WTC11 (cell line): ENCODE measurements at regions of chr12 and their contacts with region 1.

Region 1: GRCh38 chr12:121579981-121580868 is 598 bp downstream of the KDM2B start:
- DNase-seq: peak; percentile 81
- ATAC-seq: peak; percentile 7; the same call in 1 of the 2 replicates
- H3K4me3 Mint-ChIP-seq: peak overlapping the region; percentile 99
- H3K27ac Mint-ChIP-seq: peak overlapping the region; percentile 100
- H3K4me1 Mint-ChIP-seq: peaks cover 46% of the 10 kb centered on the region
- H3K27me3 Mint-ChIP-seq: no peaks in the 10 kb centered on the region
- CTCF ChIP-seq: no peak

Region 2: DNA sequence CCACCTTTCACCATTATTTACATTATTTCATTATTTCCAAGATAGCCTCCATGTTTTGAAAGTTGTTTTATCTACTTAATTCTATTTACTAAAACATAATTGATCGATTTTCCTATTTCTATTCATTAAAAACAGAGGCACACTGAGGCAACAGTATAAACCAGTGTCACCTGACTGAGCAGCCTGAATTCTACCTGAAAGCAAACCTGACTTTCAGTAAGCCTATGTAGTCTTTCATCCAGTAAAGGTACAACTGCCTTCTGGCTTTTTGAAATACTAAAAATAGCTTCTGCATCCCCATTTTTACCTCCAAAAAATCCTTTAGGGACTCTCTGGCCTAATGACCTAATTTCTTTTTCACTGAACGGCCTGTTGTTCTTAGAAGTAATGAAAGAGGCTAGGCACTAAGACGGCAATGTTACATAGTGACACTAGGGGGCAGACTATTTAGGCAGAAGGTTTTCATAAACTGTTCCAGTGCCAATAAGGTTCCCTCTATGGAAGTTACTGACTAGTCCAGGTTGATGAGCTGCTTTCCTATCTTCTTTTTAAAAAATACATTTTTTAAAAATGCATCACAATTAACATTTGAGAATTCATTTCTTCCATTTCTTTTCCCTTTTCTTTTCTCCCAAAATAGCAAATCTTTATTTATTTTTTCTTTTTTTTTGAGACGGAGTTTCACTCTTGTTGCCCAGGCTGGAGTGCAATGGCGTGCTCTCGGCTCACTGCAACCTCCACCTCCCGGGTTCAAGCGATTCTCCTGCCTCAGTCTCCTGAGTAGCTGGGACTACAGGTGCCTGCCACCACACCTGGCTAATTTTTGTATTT is 245.5 kb before region 1 on chr12:
- CTCF ChIA-PET with region 1: no interaction called
- POLR2A ChIA-PET with region 1: no interaction called
- DNase-seq: no peak
- ATAC-seq: peak; percentile 86
- H3K4me3 Mint-ChIP-seq: no peak overlapping the region
- H3K27ac Mint-ChIP-seq: no peak overlapping the region
- H3K4me1 Mint-ChIP-seq: 0 out of 2 replicates have a peak, but pooled peaks cover 4% of the 10 kb centered on the region
- H3K27me3 Mint-ChIP-seq: no peaks in the 10 kb centered on the region
- CTCF ChIP-seq: peak; percentile 75

Region 3: DNA sequence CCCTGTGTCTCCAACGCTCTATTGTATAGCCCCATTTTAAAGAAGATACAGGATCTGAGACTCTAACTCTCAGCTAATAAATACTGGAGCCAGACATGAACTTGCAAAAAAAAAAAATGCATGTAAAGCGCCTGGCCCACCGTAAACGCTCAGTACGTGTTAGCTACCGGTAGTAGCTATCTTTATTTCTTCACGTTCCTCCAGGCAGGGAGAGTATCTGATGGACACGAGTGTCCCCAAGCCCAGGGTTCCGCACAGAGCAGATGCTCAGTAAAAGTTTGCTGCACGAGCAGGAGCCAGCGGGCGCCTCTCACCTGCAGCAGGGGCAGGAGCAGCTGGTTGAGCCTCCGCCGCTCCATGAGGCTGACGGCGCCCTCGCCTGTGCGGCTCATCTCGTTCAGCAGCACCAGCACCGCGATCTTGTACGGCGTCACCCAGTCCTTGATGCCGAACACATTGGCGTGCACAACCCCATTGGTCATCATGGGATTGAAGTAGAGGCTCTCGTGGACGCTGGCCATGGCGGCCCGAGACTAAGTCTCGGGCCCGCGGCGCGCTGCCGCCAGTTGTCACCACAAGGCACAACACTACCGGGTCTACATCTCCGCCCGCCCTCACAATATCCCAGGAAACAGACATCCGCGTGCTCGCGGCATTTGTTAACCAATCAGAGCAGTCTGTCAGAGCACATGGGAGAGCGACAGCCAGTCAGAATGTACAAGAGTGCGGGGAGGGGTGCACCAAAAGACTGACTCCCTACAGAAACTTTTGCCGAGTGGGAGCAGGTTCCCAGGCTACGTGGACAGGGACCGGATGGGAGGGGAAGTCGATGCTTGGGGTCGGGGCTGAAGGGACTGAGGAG is 228.2 kb before region 1 on chr12 and contains the start of gene ANAPC5:
- CTCF ChIA-PET with region 1: no interaction called
- POLR2A ChIA-PET with region 1: no interaction called
- DNase-seq: peak; percentile 90
- ATAC-seq: peak; percentile 97
- H3K4me3 Mint-ChIP-seq: peak within 1 kb of the TSS; percentile 99
- H3K27ac Mint-ChIP-seq: peak within 1 kb of the TSS; percentile 96
- H3K4me1 Mint-ChIP-seq: peaks cover 8% of the 10 kb centered on the region
- H3K27me3 Mint-ChIP-seq: no peaks in the 10 kb centered on the region; the same call in 1 of the 2 replicates
- CTCF ChIP-seq: no peak
- total RNA-seq, gene ANAPC5: 98.5 to 116 TPM (median 104 TPM) in 3 replicates

Region 4: DNA sequence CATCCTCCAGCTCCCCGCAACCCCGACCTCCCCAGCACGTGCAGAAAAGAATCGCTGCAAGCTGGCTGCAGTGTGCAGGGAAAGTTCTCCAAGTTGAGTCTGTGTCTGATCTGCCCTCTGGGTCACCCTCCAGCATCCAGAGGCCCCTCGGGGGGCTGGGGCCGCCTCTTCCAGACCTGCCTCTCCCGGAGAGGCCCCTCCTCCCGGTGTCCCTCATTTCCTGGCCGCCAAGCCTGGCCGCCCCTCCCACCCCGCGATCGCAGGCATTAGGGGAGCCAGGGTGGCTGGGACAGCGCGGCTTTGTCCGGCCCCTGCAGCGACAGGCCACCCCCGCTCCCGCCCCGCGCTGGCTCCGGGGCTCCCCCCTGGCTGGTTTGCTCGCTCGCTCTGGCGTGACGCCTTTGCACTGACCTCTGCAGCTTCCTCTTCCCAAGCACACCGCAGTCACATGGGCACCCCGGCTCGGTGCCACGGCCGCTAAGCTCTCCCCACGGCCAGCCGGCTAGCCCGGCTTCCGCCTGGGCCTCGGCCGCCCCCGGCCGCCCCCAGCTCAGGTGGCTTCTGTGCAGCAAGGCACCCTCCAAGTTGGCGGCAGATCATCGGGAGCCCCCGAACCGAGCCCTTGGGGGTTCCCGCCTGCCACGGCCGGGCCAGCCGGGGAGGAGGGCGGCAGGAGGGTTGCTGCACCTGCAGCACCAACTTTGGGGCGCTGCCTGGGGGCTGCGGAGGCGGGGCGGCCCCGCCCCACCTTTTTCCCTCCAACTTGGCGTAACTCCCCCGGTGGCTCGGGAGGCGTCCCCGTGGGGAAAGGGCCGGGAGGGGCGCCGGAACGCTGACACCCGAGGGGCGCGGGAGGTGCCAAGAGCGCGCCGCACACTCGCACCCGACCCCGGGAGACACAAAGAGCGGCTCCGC is 43.1 kb before region 1 on chr12:
- CTCF ChIA-PET with region 1: interaction called, 5 read pairs
- POLR2A ChIA-PET with region 1: interaction called, 13 read pairs
- DNase-seq: peak; percentile 57
- ATAC-seq: peak; percentile 26
- H3K4me3 Mint-ChIP-seq: peak overlapping the region; percentile 65
- H3K27ac Mint-ChIP-seq: no peak overlapping the region
- H3K4me1 Mint-ChIP-seq: peaks cover 59% of the 10 kb centered on the region
- H3K27me3 Mint-ChIP-seq: peaks cover 9% of the 10 kb centered on the region
- CTCF ChIP-seq: no peak

Region 5: DNA sequence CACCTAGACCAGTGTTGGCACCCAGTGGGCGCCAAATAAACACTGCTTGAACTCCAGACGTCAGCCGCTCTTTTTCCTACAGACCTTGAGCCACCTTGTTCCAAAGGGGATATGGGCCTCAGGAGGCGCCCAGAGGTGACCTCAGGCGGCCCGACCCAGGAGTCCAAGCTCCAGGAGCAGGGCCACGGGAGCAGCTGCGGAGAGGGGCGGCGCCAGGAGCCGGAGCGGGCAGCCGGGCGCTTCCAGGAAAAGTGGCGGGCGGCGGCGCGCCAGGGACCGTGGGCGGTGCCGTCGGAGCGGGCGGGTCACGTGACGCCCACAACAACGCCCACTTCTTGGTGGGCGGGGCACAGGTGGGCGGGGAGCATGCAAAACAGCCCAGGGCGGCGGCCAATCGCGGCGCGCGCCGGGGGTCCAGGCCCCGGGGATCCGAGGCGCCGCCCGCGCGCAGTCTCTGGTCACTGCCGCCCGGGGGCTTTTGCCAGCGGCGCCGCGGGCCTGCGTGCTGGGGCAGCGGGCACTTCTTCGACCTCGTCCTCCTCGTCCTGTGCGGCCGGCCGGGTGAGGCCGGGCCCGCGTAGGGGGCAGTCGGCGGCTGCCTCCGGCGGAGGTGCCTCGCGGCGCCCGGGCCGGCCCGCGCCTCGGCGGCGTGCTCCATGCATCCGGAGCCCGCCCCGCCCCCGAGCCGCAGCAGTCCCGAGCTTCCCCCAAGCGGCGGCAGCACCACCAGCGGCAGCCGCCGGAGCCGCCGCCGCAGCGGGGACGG is 46.0 kb after region 1 on chr12 and contains the start of gene ORAI1:
- CTCF ChIA-PET with region 1: interaction called, 61 read pairs
- POLR2A ChIA-PET with region 1: interaction called, 73 read pairs
- DNase-seq: peak; percentile 96
- ATAC-seq: peak; percentile 72
- H3K4me3 Mint-ChIP-seq: peak within 1 kb of the TSS; percentile 81
- H3K27ac Mint-ChIP-seq: peak within 1 kb of the TSS; percentile 80
- H3K4me1 Mint-ChIP-seq: peaks cover 49% of the 10 kb centered on the region
- H3K27me3 Mint-ChIP-seq: no peaks in the 10 kb centered on the region
- CTCF ChIP-seq: no peak
- total RNA-seq, gene ORAI1: 27.7 to 28.9 TPM (median 28.6 TPM) in 3 replicates

Region 6: GRCh38 chr12:121802846-121803630 is 222.8 kb after region 1 on chr12:
- CTCF ChIA-PET with region 1: no interaction called
- POLR2A ChIA-PET with region 1: interaction called, 15 read pairs
- DNase-seq: peak; percentile 83
- ATAC-seq: peak; percentile 59
- H3K4me3 Mint-ChIP-seq: peak overlapping the region; percentile 79
- H3K27ac Mint-ChIP-seq: peak overlapping the region; percentile 100
- H3K4me1 Mint-ChIP-seq: peaks cover 42% of the 10 kb centered on the region
- H3K27me3 Mint-ChIP-seq: no peaks in the 10 kb centered on the region
- CTCF ChIP-seq: no peak